ENCODE measurements at regions of chr20 and their contacts with region 1.

Region 1: GRCh38 chr20:60599388-60599787 is 641.2 kb downstream of the CDH26 start:
- DNase-seq: no peak
- ATAC-seq: no peak
- H3K4me3 ChIP-seq: no peak overlapping the region
- H3K27ac ChIP-seq: no peak overlapping the region
- H3K4me1 ChIP-seq: no peaks in the 10 kb centered on the region
- H3K27me3 ChIP-seq: peaks cover 0 to 8% (median 0%) of the 10 kb centered on the region in 7 donors
- CTCF ChIP-seq: no peak

Region 2: GRCh38 chr20:60642541-60642940 is 43.2 kb after region 1 on chr20:
- intact Hi-C with region 1: loop called in 1 of 10 experiments (anchors 1 kb)
- DNase-seq: no peak
- ATAC-seq: no peak
- H3K4me3 ChIP-seq: no peak overlapping the region
- H3K27ac ChIP-seq: no peak overlapping the region
- H3K4me1 ChIP-seq: no peaks in the 10 kb centered on the region
- H3K27me3 ChIP-seq: peaks cover 0 to 7% (median 0%) of the 10 kb centered on the region in 7 donors
- CTCF ChIP-seq: no peak

Measured in heart right ventricle (tissue), 16 donors.